Upper lobe of right lung (tissue), 1 donor: ENCODE measurements at regions of chr1 and their contacts with region 1.

Region 1: GRCh38 chr1:67766141-67766978 is 66.9 kb downstream of the GNG12 start:
- DNase-seq: no peak
- ATAC-seq: peak; percentile 54
- H3K4me3 ChIP-seq: peak overlapping the region; percentile 23
- H3K27ac ChIP-seq: peak overlapping the region; percentile 21
- H3K4me1 ChIP-seq: peaks cover 4% of the 10 kb centered on the region
- H3K27me3 ChIP-seq: no peaks in the 10 kb centered on the region
- CTCF ChIP-seq: peak; percentile 69

Region 2: GRCh38 chr1:68111519-68112436 is 345.4 kb after region 1 on chr1:
- intact Hi-C with region 1: loop called (anchors 5 kb)
- DNase-seq: no peak
- ATAC-seq: peak; percentile 78
- H3K4me3 ChIP-seq: no peak overlapping the region
- H3K27ac ChIP-seq: no peak overlapping the region
- H3K4me1 ChIP-seq: peaks cover 7% of the 10 kb centered on the region
- H3K27me3 ChIP-seq: no peaks in the 10 kb centered on the region
- CTCF ChIP-seq: peak; percentile 51